ENCODE measurements at regions of chr4 and their contacts with region 1.

Region 1: GRCh38 chr4:182806259-182807252 is 110.6 kb downstream of the DCTD start:
- DNase-seq: peak; percentile 82
- ATAC-seq: peak; percentile 89 to 93

Region 2: DNA sequence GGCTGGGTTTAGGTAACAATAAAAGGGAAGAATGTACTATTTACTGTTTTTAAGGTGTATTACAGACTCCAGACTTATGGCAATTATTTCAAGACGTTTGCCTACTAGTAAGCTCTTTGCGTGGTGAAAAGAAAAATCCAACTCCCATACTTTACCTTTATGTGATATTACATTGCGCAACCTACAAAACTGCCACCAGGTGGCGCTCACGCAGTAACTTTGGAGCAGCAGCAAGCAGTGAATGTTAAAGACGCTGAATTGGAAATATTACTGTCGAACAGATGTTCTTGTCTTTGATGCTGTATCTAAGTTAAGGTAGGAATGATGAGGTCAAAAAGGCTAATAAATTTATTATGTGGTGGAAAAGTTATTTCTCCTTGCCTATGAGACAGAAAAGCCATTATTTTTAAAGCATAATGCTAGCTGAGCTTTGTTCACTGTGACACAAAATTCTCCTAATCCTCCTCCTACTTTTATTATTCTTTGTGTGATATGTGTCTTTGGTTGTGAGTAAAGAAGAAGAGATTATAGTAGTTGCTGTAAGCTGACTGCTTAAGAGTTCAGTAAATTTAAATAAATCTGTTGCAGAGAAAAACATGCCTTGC is 1663.2 kb before region 1 on chr4:
- intact Hi-C with region 1: loop called in 1 of 2 experiments (anchors 10 kb)
- DNase-seq: peak; percentile 74
- ATAC-seq: peak; percentile 62 to 73

Region 3: GRCh38 chr4:181569553-181569952 is 1237.0 kb before region 1 on chr4:
- intact Hi-C with region 1: loop called in 1 of 2 experiments (anchors 10 kb)
- DNase-seq: no peak
- ATAC-seq: peak; percentile 58 to 73

Region 4: GRCh38 chr4:182143822-182144625 is 662.5 kb before region 1 on chr4:
- intact Hi-C with region 1: loop called in 1 of 2 experiments (anchors 5 kb)
- DNase-seq: no peak
- ATAC-seq: peak; percentile 60 to 78

Region 5: GRCh38 chr4:182478475-182478874 is 328.1 kb before region 1 on chr4:
- intact Hi-C with region 1: loop called (anchors 5 kb)
- DNase-seq: no peak
- ATAC-seq: peak in 1 of 2 donors; percentile 29

Region 6: DNA sequence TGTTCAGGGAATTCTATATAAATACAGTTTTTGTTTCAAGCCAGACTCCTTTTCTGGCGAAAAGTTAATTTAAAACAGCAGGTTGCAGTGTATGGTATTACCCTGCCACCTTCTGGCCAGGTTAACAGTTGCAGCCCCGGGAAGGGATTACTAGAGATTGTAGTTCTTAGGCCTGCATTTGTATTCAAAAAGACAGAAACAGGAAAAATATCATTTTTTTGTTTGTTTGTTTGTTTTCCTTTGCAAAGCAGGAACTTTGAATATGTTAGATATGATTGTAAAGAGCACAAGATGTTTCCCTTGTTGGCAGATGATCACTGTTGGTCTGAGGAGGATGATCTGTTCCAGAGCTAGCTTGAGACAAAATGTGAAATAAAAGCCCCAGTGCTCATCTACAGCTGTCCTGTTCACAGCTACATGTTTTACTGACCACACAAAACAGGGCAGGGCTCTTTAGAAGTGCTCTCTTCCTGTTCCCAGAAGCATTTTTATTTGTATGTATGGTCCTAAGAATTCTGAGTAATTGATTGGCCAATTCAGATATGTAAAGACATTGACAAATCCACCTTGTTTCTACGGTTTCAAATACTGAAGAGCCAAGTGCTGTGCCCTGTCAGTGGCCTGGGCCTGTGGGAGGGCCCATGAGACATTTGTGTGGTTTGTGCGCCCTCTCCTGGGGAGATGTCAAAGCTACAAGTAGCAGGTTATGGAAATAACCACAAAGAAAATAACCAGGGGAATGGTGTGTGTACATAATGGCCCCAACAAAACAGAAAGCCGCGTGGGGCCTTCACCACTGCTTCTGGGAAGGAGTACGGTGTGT is 455.6 kb after region 1 on chr4:
- intact Hi-C with region 1: loop called in 1 of 2 experiments (anchors 10 kb)
- DNase-seq: peak; percentile 82
- ATAC-seq: peak; percentile 94 to 97

Measured in left cardiac atrium (tissue), 4 donors.